GM12878 (cell line): ENCODE measurements at regions of chr6 and their contacts with region 1.

Region 1: GRCh38 chr6:56708810-56709597 is 66.3 kb upstream of the DST start:
- DNase-seq: no peak
- ATAC-seq: peak; percentile 72
- H3K4me3 ChIP-seq: no peak overlapping the region
- H3K27ac ChIP-seq: 0 out of 2 replicates have a peak overlapping the region, but pooled peaks have one; percentile 1
- H3K4me1 ChIP-seq: peaks cover 8% of the 10 kb centered on the region
- H3K27me3 ChIP-seq: no peaks in the 10 kb centered on the region
- CTCF ChIP-seq: peak; percentile 29 to 54 (median 53); a peak in 4 of 6 replicates
- EP300 ChIP-seq: no peak
- POLR2A ChIP-seq: no peak
- RAD21 ChIP-seq: peak; percentile 45

Region 2: DNA sequence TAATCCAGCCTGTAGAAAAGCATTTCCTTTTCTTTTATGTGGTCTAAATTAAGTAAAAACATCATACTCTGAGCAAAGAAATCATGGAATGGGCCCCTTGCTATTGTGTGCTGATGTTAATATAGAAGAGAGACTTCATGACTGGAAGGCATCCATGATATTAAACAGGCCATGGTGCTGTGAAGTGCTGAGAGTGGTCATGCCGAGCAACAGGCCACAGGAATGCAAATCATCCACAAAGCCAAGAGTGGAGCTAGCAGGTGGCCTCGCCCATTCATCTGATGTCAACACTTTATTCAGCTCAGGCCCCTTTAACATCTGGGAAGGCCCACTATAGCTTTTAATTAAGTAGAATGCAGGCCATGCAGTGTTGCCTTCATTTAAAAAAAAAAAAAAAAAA is 1014.9 kb before region 1 on chr6:
- CTCF ChIA-PET with region 1: no interaction called
- POLR2A ChIA-PET with region 1: no interaction called
- RAD21 ChIA-PET with region 1: no interaction called
- SMC1A ChIA-PET with region 1: no interaction called
- in situ Hi-C with region 1: no loop called
- intact Hi-C with region 1: no loop called
- DNase-seq: no peak
- ATAC-seq: no peak
- H3K4me3 ChIP-seq: no peak overlapping the region
- H3K27ac ChIP-seq: no peak overlapping the region
- H3K4me1 ChIP-seq: no peaks in the 10 kb centered on the region
- H3K27me3 ChIP-seq: no peaks in the 10 kb centered on the region
- CTCF ChIP-seq: no peak
- EP300 ChIP-seq: no peak
- POLR2A ChIP-seq: no peak
- RAD21 ChIP-seq: no peak

Region 3: GRCh38 chr6:56618050-56618449 is 91.0 kb before region 1 on chr6:
- CTCF ChIA-PET with region 1: no interaction called
- POLR2A ChIA-PET with region 1: no interaction called
- RAD21 ChIA-PET with region 1: no interaction called
- SMC1A ChIA-PET with region 1: no interaction called
- in situ Hi-C with region 1: no loop called
- intact Hi-C with region 1: no loop called
- DNase-seq: no peak
- ATAC-seq: peak; percentile 61
- H3K4me3 ChIP-seq: no peak overlapping the region
- H3K27ac ChIP-seq: no peak overlapping the region
- H3K4me1 ChIP-seq: no peaks in the 10 kb centered on the region
- H3K27me3 ChIP-seq: no peaks in the 10 kb centered on the region
- CTCF ChIP-seq: peak in 2 of 3 experiments; percentile 14 to 21; a peak in 1 of 6 replicates
- EP300 ChIP-seq: no peak
- POLR2A ChIP-seq: no peak
- RAD21 ChIP-seq: no peak

Region 4: DNA sequence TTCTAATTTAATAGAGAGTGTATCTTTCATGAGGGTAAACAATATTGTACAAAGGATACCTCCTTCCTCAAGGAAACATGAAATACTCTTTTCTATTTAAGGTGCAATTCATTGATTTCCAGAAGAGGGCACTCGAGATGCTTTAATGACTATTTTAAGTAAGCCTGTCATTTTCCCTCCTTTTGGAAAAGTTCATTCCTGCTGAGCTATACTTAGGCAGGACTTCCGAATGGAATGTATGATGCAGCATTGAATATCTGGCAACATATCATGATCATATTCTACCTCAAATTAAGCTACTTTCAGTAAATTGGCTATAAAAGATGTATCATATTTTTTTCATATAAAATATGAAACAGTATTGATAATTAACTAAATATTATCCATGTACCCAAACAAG is 71.4 kb before region 1 on chr6:
- CTCF ChIA-PET with region 1: interaction called, 31 read pairs
- POLR2A ChIA-PET with region 1: no interaction called
- RAD21 ChIA-PET with region 1: interaction called, 3 read pairs
- SMC1A ChIA-PET with region 1: interaction called, 12 read pairs
- in situ Hi-C with region 1: no loop called
- intact Hi-C with region 1: no loop called
- DNase-seq: peak; percentile 7
- ATAC-seq: peak; percentile 52; the same call in 2 of the 3 replicates
- H3K4me3 ChIP-seq: no peak overlapping the region
- H3K27ac ChIP-seq: no peak overlapping the region
- H3K4me1 ChIP-seq: no peaks in the 10 kb centered on the region
- H3K27me3 ChIP-seq: no peaks in the 10 kb centered on the region
- CTCF ChIP-seq: peak; percentile 51 to 59 (median 55); a peak in 5 of 6 replicates
- EP300 ChIP-seq: no peak
- POLR2A ChIP-seq: no peak
- RAD21 ChIP-seq: peak; percentile 74

Region 5: GRCh38 chr6:56652231-56652630 is 56.8 kb before region 1 on chr6:
- CTCF ChIA-PET with region 1: no interaction called
- POLR2A ChIA-PET with region 1: no interaction called
- RAD21 ChIA-PET with region 1: no interaction called
- SMC1A ChIA-PET with region 1: no interaction called
- in situ Hi-C with region 1: no loop called
- intact Hi-C with region 1: no loop called
- DNase-seq: no peak
- ATAC-seq: no peak
- H3K4me3 ChIP-seq: no peak overlapping the region
- H3K27ac ChIP-seq: no peak overlapping the region
- H3K4me1 ChIP-seq: no peaks in the 10 kb centered on the region
- H3K27me3 ChIP-seq: no peaks in the 10 kb centered on the region
- CTCF ChIP-seq: no peak
- EP300 ChIP-seq: no peak
- POLR2A ChIP-seq: no peak
- RAD21 ChIP-seq: no peak

Region 6: DNA sequence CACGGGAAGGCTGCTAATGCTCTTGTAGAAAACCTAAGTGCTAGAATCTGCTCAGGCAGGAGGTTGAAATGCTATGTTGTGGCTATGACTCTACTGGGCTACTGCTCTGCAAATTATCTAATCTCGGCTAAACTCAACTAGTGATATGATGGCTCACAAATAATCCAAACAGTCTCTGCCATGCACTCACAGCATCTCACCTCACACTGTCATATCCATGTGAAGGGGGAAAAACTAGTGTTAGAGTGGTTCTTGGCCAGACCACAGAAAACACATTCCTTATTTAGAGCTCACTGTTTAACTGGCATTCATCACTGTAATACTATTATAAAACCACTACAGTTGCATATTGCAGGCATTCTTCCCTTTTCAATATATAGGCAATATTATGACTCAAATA is 15.5 kb after region 1 on chr6:
- CTCF ChIA-PET with region 1: interaction called, 105 read pairs
- POLR2A ChIA-PET with region 1: interaction called, 4 read pairs
- RAD21 ChIA-PET with region 1: interaction called, 12 read pairs
- SMC1A ChIA-PET with region 1: interaction called, 17 read pairs
- in situ Hi-C with region 1: no loop called
- intact Hi-C with region 1: no loop called
- DNase-seq: no peak
- ATAC-seq: no peak
- H3K4me3 ChIP-seq: no peak overlapping the region
- H3K27ac ChIP-seq: no peak overlapping the region
- H3K4me1 ChIP-seq: peaks cover 7% of the 10 kb centered on the region
- H3K27me3 ChIP-seq: no peaks in the 10 kb centered on the region
- CTCF ChIP-seq: no peak
- EP300 ChIP-seq: no peak
- POLR2A ChIP-seq: no peak
- RAD21 ChIP-seq: no peak

Region 7: GRCh38 chr6:56742122-56742791 is 33.3 kb after region 1 on chr6:
- CTCF ChIA-PET with region 1: interaction called, 24 read pairs
- POLR2A ChIA-PET with region 1: interaction called, 3 read pairs
- RAD21 ChIA-PET with region 1: interaction called, 13 read pairs
- SMC1A ChIA-PET with region 1: interaction called, 20 read pairs
- in situ Hi-C with region 1: no loop called
- intact Hi-C with region 1: no loop called
- DNase-seq: no peak
- ATAC-seq: peak; percentile 83
- H3K4me3 ChIP-seq: peak overlapping the region; percentile 17; the same call in 1 of the 2 replicates
- H3K27ac ChIP-seq: peak overlapping the region; percentile 50
- H3K4me1 ChIP-seq: peaks cover 20% of the 10 kb centered on the region
- H3K27me3 ChIP-seq: no peaks in the 10 kb centered on the region
- CTCF ChIP-seq: no peak
- EP300 ChIP-seq: no peak
- POLR2A ChIP-seq: no peak
- RAD21 ChIP-seq: no peak

Region 8: GRCh38 chr6:56764081-56764566 is 55.1 kb after region 1 on chr6:
- CTCF ChIA-PET with region 1: interaction called, 260 read pairs
- POLR2A ChIA-PET with region 1: interaction called, 5 read pairs
- RAD21 ChIA-PET with region 1: interaction called, 181 read pairs
- SMC1A ChIA-PET with region 1: interaction called, 396 read pairs
- in situ Hi-C with region 1: no loop called
- intact Hi-C with region 1: no loop called
- DNase-seq: peak; percentile 84
- ATAC-seq: peak; percentile 51
- H3K4me3 ChIP-seq: peak overlapping the region; percentile 22; the same call in 1 of the 2 replicates
- H3K27ac ChIP-seq: peak overlapping the region; percentile 65
- H3K4me1 ChIP-seq: peaks cover 86% of the 10 kb centered on the region
- H3K27me3 ChIP-seq: no peaks in the 10 kb centered on the region
- CTCF ChIP-seq: peak; percentile 44 to 57 (median 57); a peak in 4 of 6 replicates
- EP300 ChIP-seq: peak in 1 of 2 experiments; percentile 30; a peak in 2 of 4 replicates
- POLR2A ChIP-seq: no peak
- RAD21 ChIP-seq: peak; percentile 60

Region 9: GRCh38 chr6:56843573-56844349 is 134.8 kb after region 1 on chr6:
- CTCF ChIA-PET with region 1: interaction called, 468 read pairs
- POLR2A ChIA-PET with region 1: interaction called, 4 read pairs
- RAD21 ChIA-PET with region 1: interaction called, 276 read pairs
- SMC1A ChIA-PET with region 1: interaction called, 315 read pairs
- in situ Hi-C with region 1: no loop called
- intact Hi-C with region 1: no loop called
- DNase-seq: peak; percentile 66
- ATAC-seq: peak; percentile 91
- H3K4me3 ChIP-seq: peak overlapping the region; percentile 95
- H3K27ac ChIP-seq: peak overlapping the region; percentile 82
- H3K4me1 ChIP-seq: peaks cover 45% of the 10 kb centered on the region
- H3K27me3 ChIP-seq: no peaks in the 10 kb centered on the region
- CTCF ChIP-seq: peak; percentile 66 to 70 (median 70); a peak in 5 of 6 replicates
- EP300 ChIP-seq: no peak
- POLR2A ChIP-seq: peak; percentile 71
- RAD21 ChIP-seq: peak; percentile 67

Region 10: GRCh38 chr6:56902641-56903464 is 193.8 kb after region 1 on chr6:
- CTCF ChIA-PET with region 1: interaction called, 35 read pairs
- POLR2A ChIA-PET with region 1: no interaction called
- RAD21 ChIA-PET with region 1: interaction called, 5 read pairs
- SMC1A ChIA-PET with region 1: interaction called, 19 read pairs
- in situ Hi-C with region 1: no loop called
- intact Hi-C with region 1: no loop called
- DNase-seq: no peak
- ATAC-seq: peak; percentile 80
- H3K4me3 ChIP-seq: no peak overlapping the region
- H3K27ac ChIP-seq: no peak overlapping the region
- H3K4me1 ChIP-seq: no peaks in the 10 kb centered on the region
- H3K27me3 ChIP-seq: no peaks in the 10 kb centered on the region
- CTCF ChIP-seq: peak; percentile 61 to 65 (median 61); a peak in 5 of 6 replicates
- EP300 ChIP-seq: no peak
- POLR2A ChIP-seq: no peak
- RAD21 ChIP-seq: peak; percentile 80